Ascending aorta (tissue), 2 donors: ENCODE measurements at regions of chr1 and their contacts with region 1.

Region 1: DNA sequence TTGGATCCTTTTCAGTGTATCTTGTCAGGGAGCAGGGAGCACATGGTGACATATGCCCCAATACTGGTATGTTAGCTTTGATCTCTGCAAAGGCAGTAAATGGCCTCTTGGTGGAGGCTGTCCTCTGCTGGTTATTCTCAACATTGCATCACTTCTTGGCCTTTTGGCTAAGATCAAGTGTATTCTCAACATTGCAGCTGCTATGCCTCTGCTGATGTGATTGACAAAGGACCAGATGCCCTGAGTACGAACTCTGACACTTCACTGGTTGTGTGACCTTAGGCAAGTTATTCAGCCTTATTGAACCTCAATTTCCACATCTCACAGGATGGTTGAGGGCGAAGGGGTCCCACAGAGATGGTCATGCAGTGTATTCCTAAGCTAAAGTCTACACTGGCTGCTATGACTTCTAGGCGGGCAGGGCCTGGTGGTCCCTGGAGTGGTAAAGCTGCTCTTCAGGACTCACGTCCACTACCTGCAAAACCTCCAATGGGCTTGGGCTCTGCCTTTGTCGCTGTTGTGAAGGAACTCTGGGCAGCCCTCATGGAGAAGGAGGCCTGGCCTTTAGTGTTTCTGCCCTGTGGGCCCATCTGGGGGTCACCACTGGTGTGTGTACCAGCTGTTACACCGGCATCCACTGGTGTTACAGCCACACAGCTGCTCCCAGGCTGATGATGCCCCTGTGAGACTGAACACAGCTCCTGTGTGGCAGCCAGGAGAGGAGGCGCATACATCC is 64.8 kb downstream of the DNTTIP2 start:
- DNase-seq: peak in 1 of 2 donors; percentile 82
- H3K4me3 ChIP-seq: no peak overlapping the region
- H3K27ac ChIP-seq: no peak overlapping the region
- H3K4me1 ChIP-seq: peaks cover 0 to 11% of the 10 kb centered on the region in 2 donors
- H3K27me3 ChIP-seq: no peaks in the 10 kb centered on the region
- CTCF ChIP-seq: peak; percentile 95 to 96 (median 95)

Region 2: GRCh38 chr1:93629099-93630059 is 184.8 kb before region 1 on chr1:
- intact Hi-C with region 1: loop called (anchors 1 kb)
- DNase-seq: no peak
- H3K4me3 ChIP-seq: no peak overlapping the region
- H3K27ac ChIP-seq: peak overlapping the region in 1 of 2 donors; percentile 44
- H3K4me1 ChIP-seq: peaks cover 0 to 19% of the 10 kb centered on the region in 2 donors
- H3K27me3 ChIP-seq: no peaks in the 10 kb centered on the region
- CTCF ChIP-seq: peak; percentile 69 to 87 (median 82)

Region 3: GRCh38 chr1:93692983-93693591 is 121.1 kb before region 1 on chr1:
- intact Hi-C with region 1: loop called (anchors 5 kb)
- DNase-seq: peak in 1 of 2 donors; percentile 80
- H3K4me3 ChIP-seq: peak overlapping the region in 1 of 2 donors; percentile 27
- H3K27ac ChIP-seq: peak overlapping the region; percentile 74 to 89
- H3K4me1 ChIP-seq: peaks cover 5 to 29% of the 10 kb centered on the region in 2 donors
- H3K27me3 ChIP-seq: no peaks in the 10 kb centered on the region
- CTCF ChIP-seq: no peak